WTC11 (cell line): ENCODE measurements at regions of chr15 and their contacts with region 1.

Region 1: GRCh38 chr15:42650208-42651066 is 75.0 kb downstream of the STARD9 start:
- DNase-seq: peak; percentile 53
- ATAC-seq: peak; percentile 97
- H3K4me3 Mint-ChIP-seq: no peak overlapping the region
- H3K27ac Mint-ChIP-seq: no peak overlapping the region
- H3K4me1 Mint-ChIP-seq: no peaks in the 10 kb centered on the region
- H3K27me3 Mint-ChIP-seq: no peaks in the 10 kb centered on the region
- CTCF ChIP-seq: peak; percentile 43; the same call in 1 of the 2 replicates

Region 2: GRCh38 chr15:42575188-42576039 is 75.0 kb before region 1 on chr15 and contains the start of gene STARD9:
- CTCF ChIA-PET with region 1: interaction called, 11 read pairs
- POLR2A ChIA-PET with region 1: interaction called, 3 read pairs
- DNase-seq: peak; percentile 99
- ATAC-seq: peak; percentile 97
- H3K4me3 Mint-ChIP-seq: peak within 1 kb of the TSS; percentile 90
- H3K27ac Mint-ChIP-seq: peak within 1 kb of the TSS; percentile 15
- H3K4me1 Mint-ChIP-seq: peaks cover 12% of the 10 kb centered on the region
- H3K27me3 Mint-ChIP-seq: peaks cover 65% of the 10 kb centered on the region
- CTCF ChIP-seq: no peak
- total RNA-seq, gene STARD9: 5.7 to 6.6 TPM (median 6.2 TPM) in 3 replicates

Region 3: GRCh38 chr15:42707873-42708544 is 57.6 kb after region 1 on chr15:
- CTCF ChIA-PET with region 1: no interaction called
- POLR2A ChIA-PET with region 1: no interaction called
- DNase-seq: no peak
- ATAC-seq: no peak
- H3K4me3 Mint-ChIP-seq: no peak overlapping the region
- H3K27ac Mint-ChIP-seq: no peak overlapping the region
- H3K4me1 Mint-ChIP-seq: no peaks in the 10 kb centered on the region
- H3K27me3 Mint-ChIP-seq: no peaks in the 10 kb centered on the region
- CTCF ChIP-seq: no peak